Esophagus muscularis mucosa (tissue), 4 donors: ENCODE measurements at regions of chrX and their contacts with region 1.

Region 1: DNA sequence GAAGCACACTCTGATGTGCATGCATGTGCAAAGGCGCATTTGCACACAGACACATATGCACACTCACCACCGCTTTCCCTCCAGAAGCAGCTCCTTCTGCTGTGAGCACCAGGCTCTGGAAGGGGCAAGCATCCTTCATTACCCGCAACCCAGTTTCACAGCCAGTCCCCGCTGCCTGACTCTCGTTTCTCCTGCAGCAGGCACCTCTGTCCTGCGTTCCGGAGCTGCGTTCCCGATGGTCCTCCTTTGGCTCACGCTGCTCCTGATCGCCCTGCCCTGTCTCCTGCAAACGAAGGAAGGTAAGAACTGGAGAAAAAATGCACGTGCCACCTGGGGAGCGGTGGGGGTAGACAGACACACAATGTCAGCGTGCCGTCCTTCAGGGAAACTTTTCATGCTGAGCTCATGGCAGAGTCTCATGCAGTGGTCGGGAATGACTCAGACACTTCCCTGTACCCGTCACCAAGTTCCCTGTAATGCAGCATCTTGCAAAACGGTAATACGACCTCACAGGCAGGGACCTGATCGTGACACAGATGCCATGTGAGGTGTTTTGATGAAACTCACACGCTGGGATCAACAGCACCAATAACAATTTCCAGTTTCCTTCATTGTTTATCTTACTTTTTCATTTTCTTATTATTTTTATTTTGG is 5.1 kb downstream of the IL3RA start:
- DNase-seq: no peak
- H3K4me3 ChIP-seq: no peak overlapping the region
- H3K27ac ChIP-seq: no peak overlapping the region
- H3K4me1 ChIP-seq: no peaks in the 10 kb centered on the region
- H3K27me3 ChIP-seq: no peaks in the 10 kb centered on the region
- CTCF ChIP-seq: no peak
- EP300 ChIP-seq: no peak
- POLR2A ChIP-seq: no peak

Region 2: DNA sequence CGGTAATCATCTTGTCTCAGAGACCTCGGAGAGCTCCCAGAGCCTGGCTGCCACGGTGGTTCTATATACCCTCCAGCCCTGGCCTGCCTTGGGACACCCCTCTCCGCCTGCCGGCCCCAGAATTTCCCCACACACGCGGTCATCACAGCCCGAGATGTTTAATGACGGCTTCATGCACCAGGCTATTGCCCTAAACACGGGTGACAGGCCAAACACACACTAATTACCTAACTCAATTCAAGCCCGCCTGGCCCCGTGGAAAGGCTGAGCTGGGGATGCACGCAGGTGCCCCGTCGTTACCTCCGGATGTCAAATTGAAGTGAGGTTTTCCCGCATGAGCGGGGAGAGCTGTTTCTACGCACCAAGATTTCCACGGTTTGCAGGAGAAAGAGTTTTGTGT is 882.0 kb before region 1 on chrX:
- intact Hi-C with region 1: no loop called
- DNase-seq: no peak
- H3K4me3 ChIP-seq: no peak overlapping the region
- H3K27ac ChIP-seq: no peak overlapping the region
- H3K4me1 ChIP-seq: no peaks in the 10 kb centered on the region
- H3K27me3 ChIP-seq: peaks cover 0 to 46% (median 0%) of the 10 kb centered on the region in 4 donors
- CTCF ChIP-seq: no peak
- EP300 ChIP-seq: no peak
- POLR2A ChIP-seq: no peak

Region 3: GRCh38 chrX:1154001-1154400 is 187.7 kb before region 1 on chrX:
- intact Hi-C with region 1: no loop called
- DNase-seq: peak; percentile 78
- H3K4me3 ChIP-seq: no peak overlapping the region
- H3K27ac ChIP-seq: no peak overlapping the region
- H3K4me1 ChIP-seq: no peaks in the 10 kb centered on the region
- H3K27me3 ChIP-seq: peaks cover 0 to 42% (median 0%) of the 10 kb centered on the region in 4 donors
- CTCF ChIP-seq: no peak
- EP300 ChIP-seq: no peak
- POLR2A ChIP-seq: no peak

Region 4: GRCh38 chrX:1391707-1392375 is 50.2 kb after region 1 on chrX and contains the start of gene SLC25A6:
- intact Hi-C with region 1: loop called (anchors 5 kb)
- DNase-seq: peak; percentile 100
- H3K4me3 ChIP-seq: peak within 1 kb of the TSS; percentile 91 to 100 (median 96)
- H3K27ac ChIP-seq: peak within 1 kb of the TSS; percentile 96 to 100 (median 99)
- H3K4me1 ChIP-seq: peaks cover 43 to 68% (median 65%) of the 10 kb centered on the region in 4 donors
- H3K27me3 ChIP-seq: no peaks in the 10 kb centered on the region
- CTCF ChIP-seq: peak in 1 of 3 experiments; percentile 25
- EP300 ChIP-seq: no peak
- POLR2A ChIP-seq: peak; percentile 91
- total RNA-seq, gene SLC25A6: 266 to 339 (median 313) TPM

Region 5: DNA sequence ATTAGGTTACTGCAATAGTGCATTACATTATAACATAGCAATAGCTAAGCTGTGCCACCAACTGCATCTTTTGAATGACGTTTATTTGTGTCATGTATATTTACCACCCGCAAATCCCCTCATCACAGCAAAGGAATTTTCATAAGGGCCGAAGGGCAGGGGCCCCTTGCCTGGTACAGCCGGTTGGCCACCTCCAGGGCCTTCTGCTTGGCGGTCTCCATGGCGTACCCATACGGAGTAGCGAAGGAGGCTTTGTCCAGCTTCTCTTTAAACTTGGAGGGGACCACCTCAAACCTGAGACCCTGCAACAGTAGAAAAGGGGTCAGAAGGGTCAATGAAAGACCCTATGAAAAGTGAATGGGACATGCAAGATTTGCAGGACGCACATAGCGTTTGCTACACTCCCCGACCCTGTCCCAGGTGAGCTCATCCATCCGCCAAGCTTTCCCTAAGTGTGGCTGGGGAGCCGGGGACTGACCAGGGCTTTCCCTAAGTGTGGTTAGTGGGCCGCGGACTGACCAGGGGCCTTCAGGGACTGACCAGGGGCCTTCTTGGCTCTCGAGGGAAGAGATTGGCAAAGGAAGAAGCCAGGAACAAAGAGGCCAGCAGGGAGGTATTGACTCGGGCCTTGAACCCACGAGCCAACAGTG is 100.5 kb after region 1 on chrX:
- intact Hi-C with region 1: no loop called
- DNase-seq: peak; percentile 72
- H3K4me3 ChIP-seq: no peak overlapping the region
- H3K27ac ChIP-seq: no peak overlapping the region
- H3K4me1 ChIP-seq: no peaks in the 10 kb centered on the region
- H3K27me3 ChIP-seq: no peaks in the 10 kb centered on the region
- CTCF ChIP-seq: no peak
- EP300 ChIP-seq: no peak
- POLR2A ChIP-seq: no peak

Region 6: DNA sequence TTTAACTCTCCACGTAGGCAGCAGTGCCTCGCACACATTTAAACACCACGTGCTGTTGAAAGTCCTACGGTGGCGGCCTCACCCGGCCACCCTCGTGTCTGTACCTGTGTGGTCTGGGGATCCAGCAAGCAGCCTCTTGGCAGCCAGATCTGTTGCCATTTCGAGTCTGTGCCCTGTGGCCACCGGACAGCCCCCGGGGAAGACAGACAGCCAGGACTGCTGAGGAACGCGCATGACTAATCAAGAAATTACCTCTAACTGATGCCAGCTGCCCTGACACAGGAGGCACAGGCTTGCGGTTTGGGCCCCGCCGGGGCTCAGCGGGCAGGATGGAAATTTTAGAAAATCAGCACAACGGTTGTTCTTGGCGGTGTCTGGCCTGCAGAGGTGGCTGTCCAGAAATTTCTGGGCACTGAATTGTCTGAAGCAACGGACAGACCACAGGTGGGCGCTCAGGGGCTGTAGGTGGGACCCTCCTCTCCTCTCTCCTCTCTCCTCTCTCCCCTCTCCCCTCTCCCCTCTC is 126.7 kb after region 1 on chrX:
- intact Hi-C with region 1: no loop called
- DNase-seq: peak; percentile 91
- H3K4me3 ChIP-seq: no peak overlapping the region
- H3K27ac ChIP-seq: no peak overlapping the region
- H3K4me1 ChIP-seq: no peaks in the 10 kb centered on the region
- H3K27me3 ChIP-seq: peaks cover 0 to 73% (median 2%) of the 10 kb centered on the region in 4 donors
- CTCF ChIP-seq: no peak
- EP300 ChIP-seq: no peak
- POLR2A ChIP-seq: no peak